ENCODE measurements at regions of chr20 and their contacts with region 1.

Region 1: DNA sequence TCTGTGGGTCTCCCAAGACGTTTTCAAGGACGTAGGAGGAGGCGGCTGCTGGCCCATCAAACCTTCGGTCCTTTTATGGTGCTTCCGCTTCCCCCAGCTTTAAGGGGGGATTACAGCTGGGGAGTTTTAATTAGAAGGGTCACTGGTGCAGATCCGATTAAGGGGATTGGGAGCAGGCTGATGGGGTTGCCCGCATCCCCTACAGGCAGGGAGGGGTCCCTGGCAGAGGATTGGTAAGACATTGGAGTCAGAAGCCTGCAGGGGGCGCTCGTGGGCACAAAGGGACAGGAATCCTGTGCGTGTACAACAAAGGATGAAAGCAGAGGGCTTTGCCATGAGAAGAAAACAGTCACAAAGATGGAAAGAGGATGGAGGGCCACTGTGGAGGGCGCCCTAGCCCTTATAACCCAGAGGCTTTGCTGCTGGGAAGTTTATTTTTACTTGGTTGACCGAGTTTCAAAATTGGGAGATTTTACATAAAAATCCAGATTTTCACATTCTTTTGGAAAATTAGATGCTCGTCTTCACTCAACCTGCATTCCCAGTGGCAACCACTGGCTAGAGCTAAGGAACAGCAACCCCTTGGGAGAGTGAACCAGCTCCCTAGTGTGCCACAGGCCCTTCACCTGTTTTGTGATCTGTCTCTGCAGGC is 97.9 kb downstream of the KCNB1 start:
- DNase-seq: peak; percentile 80
- ATAC-seq: peak; percentile 39

Region 2: GRCh38 chr20:49054056-49054643 is 330.4 kb before region 1 on chr20:
- intact Hi-C with region 1: no loop called
- DNase-seq: no peak
- ATAC-seq: peak; percentile 32

Region 3: DNA sequence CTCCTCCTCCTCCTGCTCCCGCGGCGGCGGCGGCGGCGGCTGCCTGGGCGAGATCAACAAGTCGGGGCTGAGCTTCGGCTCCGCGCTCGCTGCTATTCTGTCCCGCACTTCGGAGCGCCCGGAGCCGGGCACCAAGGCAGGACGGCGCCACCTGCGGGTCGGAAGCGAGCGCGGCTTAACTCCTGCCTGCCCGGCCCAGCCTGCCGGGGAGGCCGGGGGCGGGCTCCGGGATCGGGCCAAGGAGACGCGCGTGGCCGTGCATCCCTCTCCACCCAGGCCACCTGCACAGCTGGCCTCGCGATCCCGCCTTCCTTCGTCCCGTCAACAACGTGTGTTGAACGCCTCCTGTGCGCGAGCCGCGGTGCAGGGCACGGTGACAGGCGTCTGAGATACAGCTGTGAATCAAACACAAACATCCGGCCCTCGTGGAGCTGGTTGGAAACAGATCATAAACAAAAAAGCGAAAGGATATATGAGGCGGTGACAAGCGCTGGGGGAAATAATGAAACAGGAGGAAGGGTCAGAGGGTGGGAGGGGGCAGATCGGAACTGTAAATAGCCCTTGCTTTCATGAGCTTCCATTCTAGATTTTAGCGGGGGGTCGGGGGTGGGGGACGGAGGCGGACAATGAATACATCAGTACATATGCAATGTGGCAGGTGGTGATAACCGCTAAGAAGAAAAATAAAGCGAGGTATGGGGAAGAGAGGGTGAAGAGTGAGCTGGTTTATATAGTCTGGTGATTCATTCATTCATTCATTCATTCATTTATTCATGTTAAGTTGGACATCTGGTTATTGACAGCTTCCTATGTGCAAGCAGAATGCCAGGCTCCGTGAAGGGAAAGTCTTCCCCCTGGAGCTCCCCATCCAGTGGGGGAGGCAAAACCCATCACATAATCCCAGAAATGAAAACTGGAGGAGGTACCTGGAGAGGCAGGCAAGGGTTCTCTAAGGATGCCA is 99.9 kb after region 1 on chr20:
- intact Hi-C with region 1: loop called (anchors 10 kb)
- DNase-seq: peak; percentile 89
- ATAC-seq: peak; percentile 92

Region 4: DNA sequence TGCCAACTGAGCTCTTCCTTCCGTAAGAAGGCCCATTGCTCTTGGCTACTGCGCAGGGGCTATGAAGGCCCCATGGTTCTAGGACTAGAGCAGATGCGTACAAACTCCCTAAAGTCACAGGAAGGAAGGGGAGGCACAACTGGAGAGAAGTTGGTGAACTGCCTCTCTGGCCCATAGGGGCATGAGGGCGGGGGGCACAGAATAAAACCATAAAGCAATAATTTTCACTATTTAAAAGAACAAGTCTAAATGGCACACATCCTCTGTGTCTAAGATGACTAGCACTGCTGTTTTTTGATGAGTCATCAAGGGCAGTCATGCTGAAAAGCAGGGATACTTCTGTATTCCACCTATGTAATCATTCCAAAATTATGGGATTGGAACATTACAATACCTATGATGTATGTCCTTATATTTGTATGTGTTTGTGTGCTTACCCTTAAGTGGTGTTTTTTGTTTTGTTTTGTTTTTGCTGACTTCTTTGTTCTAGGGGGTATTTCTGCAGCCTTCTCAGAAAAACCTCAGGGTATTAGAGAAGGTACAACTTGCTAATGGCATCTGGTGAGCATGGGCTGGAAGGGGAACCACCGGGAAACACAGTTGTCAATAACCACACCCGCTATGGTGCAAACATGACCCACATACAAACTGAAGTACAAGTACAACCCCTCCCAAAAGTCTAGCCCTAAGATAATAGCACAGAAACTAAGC is 292.2 kb after region 1 on chr20:
- intact Hi-C with region 1: no loop called
- DNase-seq: no peak
- ATAC-seq: peak; percentile 40

Measured in left ventricle myocardium superior (tissue), 1 donor.